RWPE1 (cell line): ENCODE measurements at regions of chr1 and their contacts with region 1.

Region 1: GRCh38 chr1:181166377-181167196 is 78.1 kb downstream of the IER5 start:
- DNase-seq: peak; percentile 85
- H3K27ac ChIP-seq: 0 out of 2 replicates have a peak overlapping the region, but pooled peaks have one; percentile 20
- CTCF ChIP-seq: peak; percentile 84

Region 2: DNA sequence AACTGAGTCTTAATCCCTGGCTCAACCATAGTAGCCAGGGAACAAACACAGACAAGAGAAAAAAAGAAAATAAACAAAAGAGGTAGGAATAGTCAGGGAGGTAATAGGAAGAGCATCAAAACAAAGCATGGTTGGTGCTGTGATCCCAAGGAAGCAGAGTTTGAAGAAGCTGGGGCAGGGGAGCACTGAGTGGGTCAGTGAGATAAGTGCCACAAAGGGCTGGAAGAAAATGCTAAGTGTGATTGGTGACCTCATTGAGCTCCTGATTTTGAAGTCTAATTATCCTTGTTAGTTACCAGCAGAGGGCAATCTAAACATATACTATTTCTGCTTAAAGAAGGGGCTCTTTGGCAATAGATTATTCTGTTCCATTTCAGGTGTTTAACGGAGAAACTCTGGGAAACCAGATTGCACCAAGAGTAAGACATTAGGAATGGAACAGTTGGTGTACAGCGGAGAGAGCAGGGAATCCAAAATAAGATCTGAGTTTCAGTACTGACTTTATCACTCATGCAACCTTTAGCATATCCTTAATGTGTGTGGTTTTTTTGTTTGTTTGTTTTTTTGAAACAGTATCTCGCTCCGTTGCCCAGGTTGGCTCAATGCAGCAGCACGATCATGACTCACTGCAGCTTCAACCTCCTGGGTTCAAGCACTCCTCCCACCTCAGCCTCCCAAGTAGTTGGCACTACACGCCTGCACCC is 284.6 kb before region 1 on chr1:
- CTCF ChIA-PET with region 1: interaction called, 11 read pairs
- POLR2A ChIA-PET with region 1: no interaction called
- DNase-seq: peak; percentile 44
- H3K27ac ChIP-seq: no peak overlapping the region
- CTCF ChIP-seq: peak; percentile 50

Region 3: DNA sequence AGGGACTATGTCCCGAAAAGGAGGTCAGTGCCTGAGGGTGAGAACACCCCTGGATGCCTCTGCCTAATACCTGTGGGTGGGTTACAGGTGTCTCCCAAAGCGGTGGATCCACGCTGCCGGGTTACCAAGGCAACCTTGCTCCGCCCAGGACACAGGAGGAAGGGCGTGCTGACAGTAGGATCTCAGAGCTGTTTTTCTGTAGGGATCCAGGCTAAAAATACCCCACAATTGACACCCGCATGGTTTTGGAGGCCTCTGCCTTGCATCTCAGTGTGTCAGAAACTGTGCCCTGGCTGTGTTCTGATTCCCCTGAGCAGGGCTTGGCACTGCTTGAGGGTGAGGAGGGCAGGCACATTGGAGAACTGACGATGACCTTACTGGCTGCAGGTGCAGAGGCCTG is 39.9 kb after region 1 on chr1:
- CTCF ChIA-PET with region 1: no interaction called
- POLR2A ChIA-PET with region 1: no interaction called
- DNase-seq: no peak
- H3K27ac ChIP-seq: no peak overlapping the region
- CTCF ChIP-seq: no peak

Region 4: DNA sequence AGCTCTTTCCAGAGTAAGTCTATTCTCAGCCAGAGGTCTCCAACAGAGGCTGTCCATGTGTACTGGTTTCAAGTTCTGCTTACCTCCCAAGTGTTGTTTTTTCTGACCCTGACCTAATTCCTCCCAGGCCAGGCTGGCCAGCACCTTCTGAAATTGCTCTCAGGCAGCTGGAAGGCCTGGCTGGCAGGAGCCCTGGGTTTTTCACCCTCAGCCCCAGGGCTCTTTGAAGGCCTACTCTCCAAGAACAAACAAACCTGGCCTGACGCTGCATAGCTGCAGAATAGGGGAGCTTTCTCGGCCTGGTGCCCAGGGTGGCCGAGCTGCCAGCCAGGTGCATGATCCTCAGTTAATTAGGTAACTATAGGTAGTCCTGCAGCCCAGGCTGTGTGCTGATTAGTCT is 464.3 kb after region 1 on chr1:
- CTCF ChIA-PET with region 1: no interaction called
- POLR2A ChIA-PET with region 1: no interaction called
- DNase-seq: no peak
- H3K27ac ChIP-seq: no peak overlapping the region
- CTCF ChIP-seq: no peak